ENCODE measurements at regions of chr9 and their contacts with region 1.

Region 1: GRCh38 chr9:27732494-27732893 is 159.2 kb upstream of the C9orf72 start:
- DNase-seq: peak; percentile 34
- ATAC-seq: peak; percentile 77
- H3K4me3 Mint-ChIP-seq: no peak overlapping the region
- H3K27ac Mint-ChIP-seq: no peak overlapping the region
- H3K4me1 Mint-ChIP-seq: peaks cover 19% of the 10 kb centered on the region
- H3K27me3 Mint-ChIP-seq: peaks cover 1% of the 10 kb centered on the region
- CTCF ChIP-seq: no peak

Region 2: GRCh38 chr9:27581826-27582225 is 150.7 kb before region 1 on chr9:
- CTCF ChIA-PET with region 1: no interaction called
- POLR2A ChIA-PET with region 1: no interaction called
- intact Hi-C with region 1: no loop called
- DNase-seq: no peak
- ATAC-seq: no peak
- H3K4me3 Mint-ChIP-seq: no peak overlapping the region
- H3K27ac Mint-ChIP-seq: no peak overlapping the region
- H3K4me1 Mint-ChIP-seq: no peaks in the 10 kb centered on the region
- H3K27me3 Mint-ChIP-seq: peaks cover 9% of the 10 kb centered on the region
- CTCF ChIP-seq: no peak

Region 3: DNA sequence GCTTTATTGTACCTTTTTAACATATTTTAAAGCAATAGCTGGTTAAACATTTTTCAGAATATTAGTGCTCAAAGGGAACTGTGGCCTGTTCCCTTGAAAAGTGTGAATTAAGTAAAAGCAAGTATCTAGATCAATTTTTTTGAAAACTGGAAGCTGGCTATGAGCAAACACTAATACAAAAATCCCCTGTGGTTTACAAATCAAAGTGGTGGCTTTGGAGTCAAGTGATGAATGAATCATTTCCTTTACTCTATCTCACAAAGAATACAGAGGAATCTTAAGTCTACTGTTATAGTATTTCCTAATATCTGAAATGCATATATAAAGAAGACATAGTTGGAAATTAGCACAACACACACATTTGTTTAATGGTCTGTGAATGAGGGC is 53.2 kb after region 1 on chr9:
- CTCF ChIA-PET with region 1: interaction called, 3 read pairs
- POLR2A ChIA-PET with region 1: no interaction called
- intact Hi-C with region 1: loop called (anchors 5 kb)
- DNase-seq: no peak
- ATAC-seq: peak; percentile 85
- H3K4me3 Mint-ChIP-seq: no peak overlapping the region
- H3K27ac Mint-ChIP-seq: peak overlapping the region; percentile 40
- H3K4me1 Mint-ChIP-seq: peaks cover 11% of the 10 kb centered on the region
- H3K27me3 Mint-ChIP-seq: peaks cover 16% of the 10 kb centered on the region
- CTCF ChIP-seq: no peak

Region 4: GRCh38 chr9:27835286-27835685 is 102.8 kb after region 1 on chr9:
- CTCF ChIA-PET with region 1: no interaction called
- POLR2A ChIA-PET with region 1: no interaction called
- intact Hi-C with region 1: no loop called
- DNase-seq: no peak
- ATAC-seq: no peak
- H3K4me3 Mint-ChIP-seq: no peak overlapping the region
- H3K27ac Mint-ChIP-seq: no peak overlapping the region
- H3K4me1 Mint-ChIP-seq: no peaks in the 10 kb centered on the region
- H3K27me3 Mint-ChIP-seq: peaks cover 8% of the 10 kb centered on the region
- CTCF ChIP-seq: no peak